Calu3 (cell line): ENCODE measurements at regions of chr16 and their contacts with region 1.

Region 1: DNA sequence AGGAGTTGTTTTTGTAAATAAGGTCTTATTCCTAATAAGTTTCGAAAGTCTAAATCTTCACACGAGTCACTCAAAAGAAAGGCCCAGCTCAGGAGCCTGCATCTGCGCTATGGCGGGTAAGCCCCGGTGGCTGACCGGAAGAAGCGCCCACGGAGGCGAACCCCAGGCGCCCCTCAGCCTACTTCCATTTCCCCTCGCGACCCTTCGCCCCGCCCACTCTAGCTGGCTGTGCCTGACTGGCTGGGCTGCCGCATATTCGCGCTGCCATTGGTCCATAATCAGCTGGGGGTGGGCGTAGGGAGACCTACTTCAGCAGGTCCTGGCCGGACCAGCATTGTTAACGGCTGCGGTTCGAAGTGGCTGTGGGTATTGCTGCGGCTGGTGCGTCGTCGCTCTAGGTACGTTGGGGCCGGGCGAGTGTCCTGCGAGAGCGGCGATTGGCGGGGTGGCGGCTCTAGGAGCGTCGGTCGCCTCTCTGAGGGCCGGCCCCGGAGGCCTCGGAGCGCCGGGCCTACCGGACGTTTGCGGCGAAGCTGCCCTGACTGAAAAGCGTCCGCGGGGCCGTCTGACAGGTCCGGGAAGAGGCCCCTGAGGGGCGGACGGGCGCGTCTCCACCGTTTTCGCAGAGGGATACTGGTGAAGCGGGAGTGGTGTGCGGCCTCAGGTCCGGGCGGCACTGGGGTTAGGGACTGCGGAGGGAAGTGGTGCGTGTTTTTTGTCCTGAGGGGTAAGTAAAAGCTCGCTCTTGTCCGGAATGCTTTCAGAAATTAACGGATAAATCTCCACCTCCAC is at the start of gene ATF7IP2:
- DNase-seq: peak; percentile 97
- H3K4me3 Mint-ChIP-seq: peak within 1 kb of the TSS; percentile 97
- H3K27ac Mint-ChIP-seq: peak within 1 kb of the TSS; percentile 91
- H3K4me1 Mint-ChIP-seq: peaks cover 10% of the 10 kb centered on the region
- H3K27me3 Mint-ChIP-seq: no peaks in the 10 kb centered on the region
- CTCF ChIP-seq: no peak
- total RNA-seq, gene ATF7IP2: 23.9 and 29.7 TPM in 2 replicates

Region 2: GRCh38 chr16:10325783-10326543 is 60.0 kb before region 1 on chr16:
- CTCF ChIA-PET with region 1: no interaction called
- intact Hi-C with region 1: loop called (anchors 5 kb)
- DNase-seq: peak; percentile 41
- H3K4me3 Mint-ChIP-seq: no peak overlapping the region
- H3K27ac Mint-ChIP-seq: peak overlapping the region; percentile 9
- H3K4me1 Mint-ChIP-seq: peaks cover 25% of the 10 kb centered on the region
- H3K27me3 Mint-ChIP-seq: no peaks in the 10 kb centered on the region
- CTCF ChIP-seq: no peak

Region 3: GRCh38 chr16:10368969-10369551 is 16.9 kb before region 1 on chr16:
- CTCF ChIA-PET with region 1: no interaction called
- intact Hi-C with region 1: no loop called
- DNase-seq: no peak
- H3K4me3 Mint-ChIP-seq: no peak overlapping the region
- H3K27ac Mint-ChIP-seq: no peak overlapping the region
- H3K4me1 Mint-ChIP-seq: no peaks in the 10 kb centered on the region
- H3K27me3 Mint-ChIP-seq: no peaks in the 10 kb centered on the region
- CTCF ChIP-seq: no peak